ENCODE measurements at regions of chr18 and their contacts with region 1.

Region 1: GRCh38 chr18:12934454-12935071 is 13.2 kb upstream of the SEH1L start:
- DNase-seq: peak; percentile 78 to 79 (median 79)
- ATAC-seq: peak; percentile 94 to 99 (median 96)
- H3K4me3 ChIP-seq: no peak overlapping the region
- H3K27ac ChIP-seq: no peak overlapping the region
- H3K4me1 ChIP-seq: no peaks in the 10 kb centered on the region
- H3K27me3 ChIP-seq: no peaks in the 10 kb centered on the region
- CTCF ChIP-seq: peak; percentile 85 to 94 (median 92)
- POLR2A ChIP-seq: no peak

Region 2: DNA sequence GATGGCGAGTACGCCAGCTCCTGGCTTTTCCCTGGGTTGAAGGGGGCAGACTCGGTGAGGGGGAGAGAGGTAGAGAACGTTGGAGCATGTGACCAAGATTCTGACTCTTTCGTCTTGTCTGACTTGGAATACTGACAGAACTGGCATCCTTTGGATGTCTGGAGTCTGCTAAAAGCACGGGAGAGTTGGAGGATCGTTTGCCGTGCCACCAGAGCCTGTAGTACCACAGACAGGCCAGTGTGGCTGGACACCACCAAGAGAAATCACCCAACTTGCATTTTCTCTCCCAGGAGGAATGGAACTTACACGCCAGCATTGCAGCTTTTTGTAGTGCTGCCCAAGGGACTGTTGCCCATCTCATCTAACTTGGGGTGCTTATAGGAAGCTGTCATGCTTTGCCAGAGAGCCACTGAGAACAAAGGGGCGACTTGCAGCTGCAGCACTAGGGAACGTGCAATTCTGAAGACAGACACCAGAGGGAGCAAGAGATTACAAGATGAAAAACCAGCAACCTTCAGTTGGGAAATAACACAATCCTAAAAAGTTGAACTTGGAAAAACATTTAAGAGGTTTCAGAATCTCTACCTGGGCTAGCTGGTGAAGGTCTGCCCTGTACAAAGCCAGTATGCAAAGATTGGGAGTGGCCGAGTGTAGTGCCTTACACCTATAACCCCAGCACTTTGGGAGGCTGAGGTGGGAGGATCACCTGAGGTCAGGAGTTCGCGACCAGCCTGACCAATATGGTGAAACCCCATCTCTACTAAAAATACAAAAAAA is 207.6 kb before region 1 on chr18:
- intact Hi-C with region 1: loop called (anchors 5 to 10 kb)
- DNase-seq: no peak
- ATAC-seq: peak; percentile 84 to 94 (median 88)
- H3K4me3 ChIP-seq: no peak overlapping the region
- H3K27ac ChIP-seq: no peak overlapping the region
- H3K4me1 ChIP-seq: no peaks in the 10 kb centered on the region
- H3K27me3 ChIP-seq: no peaks in the 10 kb centered on the region
- CTCF ChIP-seq: peak; percentile 81 to 93 (median 85)
- POLR2A ChIP-seq: no peak

Region 3: GRCh38 chr18:12737243-12737902 is 197.2 kb before region 1 on chr18:
- intact Hi-C with region 1: loop called in 1 of 2 experiments (anchors 10 kb)
- DNase-seq: no peak
- ATAC-seq: no peak
- H3K4me3 ChIP-seq: no peak overlapping the region
- H3K27ac ChIP-seq: no peak overlapping the region
- H3K4me1 ChIP-seq: no peaks in the 10 kb centered on the region
- H3K27me3 ChIP-seq: no peaks in the 10 kb centered on the region
- CTCF ChIP-seq: no peak
- POLR2A ChIP-seq: no peak

Region 4: GRCh38 chr18:12745095-12745795 is 189.3 kb before region 1 on chr18:
- intact Hi-C with region 1: loop called in 1 of 2 experiments (anchors 5 kb)
- DNase-seq: no peak
- ATAC-seq: no peak
- H3K4me3 ChIP-seq: no peak overlapping the region
- H3K27ac ChIP-seq: no peak overlapping the region
- H3K4me1 ChIP-seq: no peaks in the 10 kb centered on the region
- H3K27me3 ChIP-seq: no peaks in the 10 kb centered on the region
- CTCF ChIP-seq: no peak
- POLR2A ChIP-seq: no peak

Region 5: DNA sequence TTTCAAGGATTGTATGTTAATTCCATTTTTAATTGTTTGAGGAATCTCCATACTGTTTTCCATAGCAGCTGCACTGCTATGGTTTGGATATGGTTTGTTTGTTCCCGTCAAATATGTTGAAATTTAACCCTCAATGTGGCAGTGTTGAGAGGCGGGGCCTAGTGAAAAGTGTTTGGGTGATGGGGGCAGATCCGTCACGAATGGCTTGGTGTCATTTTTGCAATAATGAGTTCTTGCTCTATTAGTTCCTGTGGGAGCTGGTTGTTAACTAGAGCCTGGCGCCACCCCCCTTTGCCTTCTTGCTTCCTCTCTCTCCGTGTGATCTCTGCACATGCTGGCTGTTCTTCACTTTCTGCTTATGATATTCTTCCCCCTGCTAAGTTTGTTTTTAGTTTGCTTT is 212.6 kb after region 1 on chr18:
- intact Hi-C with region 1: no loop called
- DNase-seq: no peak
- ATAC-seq: peak; percentile 24 to 49 (median 41)
- H3K4me3 ChIP-seq: no peak overlapping the region
- H3K27ac ChIP-seq: no peak overlapping the region
- H3K4me1 ChIP-seq: no peaks in the 10 kb centered on the region
- H3K27me3 ChIP-seq: no peaks in the 10 kb centered on the region
- CTCF ChIP-seq: no peak
- POLR2A ChIP-seq: no peak